Ascending aorta (tissue), 2 donors: ENCODE measurements at regions of chr12 and their contacts with region 1.

Region 1: DNA sequence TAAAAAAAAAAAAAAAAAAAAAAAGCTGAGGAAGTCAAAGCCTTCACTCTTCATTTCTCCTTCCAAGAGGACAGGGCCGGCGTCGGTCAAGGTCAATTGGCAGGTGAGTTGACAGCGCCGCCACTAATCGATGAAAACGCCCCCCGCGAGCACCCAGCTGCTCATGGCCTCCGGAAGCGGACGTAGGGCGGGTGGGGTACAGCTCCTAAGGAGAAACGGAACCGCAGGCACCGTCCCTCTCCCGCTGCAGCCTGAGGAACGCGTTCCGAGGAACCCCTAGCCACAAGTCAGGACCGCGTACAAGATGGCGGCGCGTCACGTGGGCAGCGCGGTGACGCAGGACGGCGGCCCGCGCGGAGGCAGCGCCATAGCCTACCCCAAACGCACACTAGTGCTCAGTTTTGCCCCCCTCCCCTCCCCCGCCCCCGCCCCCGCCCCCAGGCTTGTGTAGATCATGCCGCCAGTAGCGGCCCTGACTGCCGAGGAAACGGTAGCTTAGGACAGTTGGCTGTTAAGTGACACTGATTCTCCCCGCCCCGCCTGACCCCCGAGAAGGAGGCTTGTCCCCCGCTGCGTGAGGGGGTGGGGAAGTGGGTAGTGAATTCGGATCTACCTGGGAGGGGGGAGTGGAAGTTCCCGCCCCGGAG is at the start of gene ATF1:
- DNase-seq: peak; percentile 73 to 96
- H3K4me3 ChIP-seq: peak within 1 kb of the TSS; percentile 83 to 94
- H3K27ac ChIP-seq: peak within 1 kb of the TSS; percentile 96 to 98
- H3K4me1 ChIP-seq: peaks cover 0 to 15% of the 10 kb centered on the region in 2 donors
- H3K27me3 ChIP-seq: no peaks in the 10 kb centered on the region
- CTCF ChIP-seq: no peak
- total RNA-seq, gene ATF1: 6.8 TPM

Region 2: DNA sequence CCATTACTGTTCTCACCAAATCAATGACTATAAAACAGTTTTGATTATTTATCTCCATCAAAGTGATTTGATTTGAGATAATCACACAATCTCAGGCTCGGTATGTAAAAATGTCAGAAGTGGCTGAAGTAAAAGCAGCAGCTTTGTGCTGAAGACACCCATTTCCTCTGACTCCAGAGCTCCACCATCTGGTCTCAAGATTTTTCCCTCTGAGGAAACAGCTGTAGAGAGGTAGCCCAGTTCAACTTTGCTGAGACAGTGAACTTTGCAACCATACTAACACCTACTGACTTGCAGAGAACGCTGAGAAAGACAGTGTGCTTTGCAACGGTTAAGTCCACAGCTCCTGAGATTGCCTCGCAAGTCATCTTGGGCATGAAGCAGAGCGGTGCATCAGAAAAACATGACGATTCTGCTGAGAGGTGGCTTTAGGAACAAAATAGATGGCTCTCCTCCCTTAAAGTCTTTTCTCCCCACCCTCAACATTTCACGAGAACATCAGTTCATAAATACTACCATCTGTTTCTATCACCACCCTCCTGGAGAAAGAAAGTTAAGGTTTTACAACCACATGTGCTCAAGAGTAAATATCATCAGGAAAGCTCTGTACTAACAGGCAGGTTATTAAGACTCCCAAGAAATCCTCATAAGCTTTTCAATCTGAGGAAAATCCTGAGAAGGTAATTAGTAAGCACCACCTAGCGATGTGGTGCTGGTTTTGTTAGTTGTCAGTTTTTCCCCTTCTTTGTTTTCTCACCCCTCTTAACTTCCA is 223.4 kb after region 1 on chr12:
- intact Hi-C with region 1: loop called (anchors 1 kb)
- DNase-seq: peak in 1 of 2 donors; percentile 67
- H3K4me3 ChIP-seq: no peak overlapping the region
- H3K27ac ChIP-seq: peak overlapping the region in 1 of 2 donors; percentile 81
- H3K4me1 ChIP-seq: peaks cover 7 to 35% of the 10 kb centered on the region in 2 donors
- H3K27me3 ChIP-seq: no peaks in the 10 kb centered on the region
- CTCF ChIP-seq: peak; percentile 48 to 72 (median 56)